ENCODE measurements at regions of chr9 and their contacts with region 1.

Region 1: GRCh38 chr9:87336914-87337333 is 160.7 kb upstream of the DAPK1 start:
- DNase-seq: peak; percentile 24
- H3K4me3 ChIP-seq: no peak overlapping the region
- H3K27ac ChIP-seq: no peak overlapping the region
- H3K4me1 ChIP-seq: no peaks in the 10 kb centered on the region
- H3K27me3 ChIP-seq: peaks cover 8% of the 10 kb centered on the region
- CTCF ChIP-seq: peak; percentile 52

Region 2: DNA sequence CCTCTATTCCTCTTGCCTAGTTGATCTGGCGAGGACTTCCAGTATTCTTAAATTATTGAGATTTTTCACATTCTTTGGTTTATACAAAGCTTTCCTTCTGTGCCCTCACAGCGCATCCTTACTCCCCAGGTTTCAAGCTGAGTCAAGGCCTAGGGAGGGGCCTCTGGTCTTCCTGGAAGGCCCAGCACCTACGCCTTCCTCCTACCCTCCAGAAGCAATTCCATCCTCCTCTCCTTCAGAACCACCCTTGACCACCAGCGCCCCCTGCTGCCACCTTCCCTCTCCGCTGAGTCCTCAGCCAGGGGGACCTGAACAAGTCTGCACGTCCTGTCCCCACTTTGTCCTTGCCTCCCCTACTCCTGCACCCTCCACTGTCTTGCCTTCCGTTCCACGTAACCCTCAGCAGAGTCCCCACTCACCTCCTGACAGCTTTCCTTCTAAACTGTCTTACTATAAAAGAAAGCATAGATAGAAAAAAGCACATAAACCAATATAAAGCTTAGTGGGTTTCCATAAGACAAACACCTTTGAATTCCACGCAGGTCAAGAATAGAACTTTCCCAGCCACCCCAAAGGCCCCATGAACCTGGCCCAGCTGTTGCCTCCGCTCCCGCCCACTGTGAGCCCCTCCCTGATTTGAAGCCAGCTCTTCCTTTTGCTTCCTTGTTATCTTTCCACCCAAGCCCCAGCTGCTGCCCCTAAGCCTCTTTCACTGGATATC is 326.0 kb after region 1 on chr9:
- intact Hi-C with region 1: loop called (anchors 2 kb)
- DNase-seq: peak; percentile 90
- H3K4me3 ChIP-seq: no peak overlapping the region
- H3K27ac ChIP-seq: no peak overlapping the region
- H3K4me1 ChIP-seq: no peaks in the 10 kb centered on the region
- H3K27me3 ChIP-seq: no peaks in the 10 kb centered on the region
- CTCF ChIP-seq: peak; percentile 83